Activated CD8-positive, alpha-beta T cell treated with anti-CD3 and anti-CD28 coated beads, Interleukin-2, amount 10 ng/mL, durations not matched to agents 7 days and 5 days (primary cell): ENCODE measurements at regions of chr5 and their contacts with region 1.

Region 1: DNA sequence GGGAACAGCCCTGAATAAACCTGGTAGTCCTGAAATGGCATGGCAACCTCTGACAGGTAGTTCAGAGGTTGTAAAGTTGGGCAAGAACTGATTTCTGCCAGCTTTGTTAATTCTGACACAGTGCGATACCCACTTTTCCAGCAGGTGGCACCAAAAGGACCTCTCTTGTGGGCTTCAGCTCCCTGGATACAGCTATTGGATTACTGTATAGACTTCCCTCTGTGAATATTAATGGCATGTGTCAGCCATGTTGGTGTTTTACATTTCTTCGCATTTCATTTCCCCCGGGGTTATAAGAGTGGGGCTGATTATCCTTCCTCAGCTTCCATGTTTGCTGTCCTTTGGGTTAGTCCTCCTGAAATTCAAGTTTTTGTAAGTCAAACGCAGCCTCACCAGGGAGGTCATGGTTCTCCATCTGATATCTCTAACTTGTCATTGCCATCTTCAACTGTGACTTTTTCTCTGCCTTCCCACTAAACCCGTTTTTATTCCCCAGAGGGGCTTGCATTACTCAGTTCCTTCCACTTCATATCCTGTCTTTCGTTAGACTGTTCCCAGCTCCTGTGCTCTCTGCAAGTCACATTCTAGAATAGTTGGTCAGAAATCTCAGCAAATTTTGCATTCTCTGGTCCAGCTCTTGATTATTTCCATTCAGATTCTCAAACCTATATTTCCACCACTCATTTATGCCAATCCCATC is 135.6 kb downstream of the LIFR start:
- DNase-seq: peak; percentile 47
- ATAC-seq: no peak
- H3K4me3 Mint-ChIP-seq: no peak overlapping the region
- H3K27ac Mint-ChIP-seq: no peak overlapping the region
- H3K4me1 Mint-ChIP-seq: no peaks in the 10 kb centered on the region
- H3K27me3 Mint-ChIP-seq: peaks cover 26% of the 10 kb centered on the region

Region 2: DNA sequence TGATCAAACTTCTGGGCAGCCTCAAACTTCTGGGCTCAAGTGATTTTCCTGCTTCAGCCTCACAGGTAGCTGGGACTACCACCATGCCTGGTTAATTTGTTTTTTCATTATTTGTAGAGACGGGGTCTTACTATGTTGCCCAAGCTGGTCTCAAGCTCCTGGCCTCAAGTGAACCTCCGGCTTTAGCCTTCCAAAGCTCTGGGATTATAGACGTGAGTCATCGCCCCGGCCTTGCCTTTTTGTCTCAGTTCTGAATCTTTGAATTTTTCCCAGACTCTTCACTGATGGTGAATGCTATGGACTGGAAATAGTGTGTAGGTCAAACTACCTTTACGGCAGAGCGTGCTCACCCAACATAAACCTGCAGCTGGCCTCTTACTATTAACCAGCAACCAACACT is 194.8 kb before region 1 on chr5:
- CTCF ChIA-PET with region 1: no interaction called
- POLR2A ChIA-PET with region 1: no interaction called
- DNase-seq: no peak
- ATAC-seq: no peak
- H3K4me3 Mint-ChIP-seq: no peak overlapping the region
- H3K27ac Mint-ChIP-seq: no peak overlapping the region
- H3K4me1 Mint-ChIP-seq: no peaks in the 10 kb centered on the region
- H3K27me3 Mint-ChIP-seq: no peaks in the 10 kb centered on the region

Region 3: DNA sequence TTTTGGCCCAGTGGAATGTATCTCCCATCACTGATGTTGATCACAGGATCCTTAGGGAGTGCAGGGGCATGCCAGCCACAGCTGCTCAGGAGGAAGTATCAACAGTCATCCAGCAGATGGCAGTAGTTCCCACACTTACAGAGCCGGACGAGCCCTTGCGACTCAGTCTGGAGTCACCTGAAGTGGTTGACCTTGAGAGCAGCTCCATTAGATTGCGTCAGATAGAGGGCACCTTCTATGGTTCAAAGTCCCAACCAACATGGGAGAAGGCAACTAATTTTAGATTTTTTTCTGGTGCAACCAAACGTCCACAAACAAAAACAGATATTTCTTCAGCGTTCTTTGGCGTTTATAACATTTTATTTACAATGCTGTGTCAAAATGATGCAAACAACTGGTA is 37.9 kb before region 1 on chr5:
- CTCF ChIA-PET with region 1: interaction called, 13 read pairs
- POLR2A ChIA-PET with region 1: no interaction called
- DNase-seq: peak; percentile 61
- ATAC-seq: peak; percentile 87
- H3K4me3 Mint-ChIP-seq: no peak overlapping the region
- H3K27ac Mint-ChIP-seq: no peak overlapping the region
- H3K4me1 Mint-ChIP-seq: peaks cover 7% of the 10 kb centered on the region
- H3K27me3 Mint-ChIP-seq: peaks cover 24% of the 10 kb centered on the region

Region 4: GRCh38 chr5:38433160-38433861 is 12.5 kb after region 1 on chr5:
- CTCF ChIA-PET with region 1: interaction called, 12 read pairs
- POLR2A ChIA-PET with region 1: no interaction called
- DNase-seq: no peak
- ATAC-seq: no peak
- H3K4me3 Mint-ChIP-seq: no peak overlapping the region
- H3K27ac Mint-ChIP-seq: no peak overlapping the region
- H3K4me1 Mint-ChIP-seq: no peaks in the 10 kb centered on the region
- H3K27me3 Mint-ChIP-seq: peaks cover 36% of the 10 kb centered on the region

Region 5: DNA sequence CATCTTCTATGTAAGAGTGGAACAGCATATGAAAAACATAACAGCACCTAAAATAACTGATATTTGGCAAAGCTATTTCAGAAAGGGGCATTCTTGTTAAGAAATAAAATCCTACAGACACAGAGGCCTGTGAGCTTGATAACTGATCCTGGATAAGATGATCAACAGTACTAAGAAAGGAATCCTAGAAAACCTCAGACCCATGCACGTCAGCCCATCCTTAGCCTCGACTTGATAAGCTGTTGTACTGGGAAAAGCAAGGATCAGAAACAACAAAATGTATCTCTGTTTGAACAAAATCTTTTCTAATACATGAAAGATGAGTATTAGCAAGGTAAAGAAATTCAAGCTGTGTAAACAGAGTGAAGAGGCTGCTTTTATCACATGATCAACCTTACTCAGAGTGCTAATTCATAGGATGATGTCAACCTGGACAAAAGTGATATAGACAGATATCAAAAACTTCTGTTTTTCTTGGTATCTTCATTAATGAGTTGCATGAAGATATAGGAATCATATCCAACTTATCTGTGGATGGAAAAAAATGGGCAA is 120.4 kb after region 1 on chr5:
- CTCF ChIA-PET with region 1: no interaction called
- POLR2A ChIA-PET with region 1: no interaction called
- DNase-seq: no peak
- ATAC-seq: no peak
- H3K4me3 Mint-ChIP-seq: no peak overlapping the region
- H3K27ac Mint-ChIP-seq: no peak overlapping the region
- H3K4me1 Mint-ChIP-seq: no peaks in the 10 kb centered on the region
- H3K27me3 Mint-ChIP-seq: peaks cover 22% of the 10 kb centered on the region